ENCODE measurements at regions of chr4 and their contacts with region 1.

Region 1: DNA sequence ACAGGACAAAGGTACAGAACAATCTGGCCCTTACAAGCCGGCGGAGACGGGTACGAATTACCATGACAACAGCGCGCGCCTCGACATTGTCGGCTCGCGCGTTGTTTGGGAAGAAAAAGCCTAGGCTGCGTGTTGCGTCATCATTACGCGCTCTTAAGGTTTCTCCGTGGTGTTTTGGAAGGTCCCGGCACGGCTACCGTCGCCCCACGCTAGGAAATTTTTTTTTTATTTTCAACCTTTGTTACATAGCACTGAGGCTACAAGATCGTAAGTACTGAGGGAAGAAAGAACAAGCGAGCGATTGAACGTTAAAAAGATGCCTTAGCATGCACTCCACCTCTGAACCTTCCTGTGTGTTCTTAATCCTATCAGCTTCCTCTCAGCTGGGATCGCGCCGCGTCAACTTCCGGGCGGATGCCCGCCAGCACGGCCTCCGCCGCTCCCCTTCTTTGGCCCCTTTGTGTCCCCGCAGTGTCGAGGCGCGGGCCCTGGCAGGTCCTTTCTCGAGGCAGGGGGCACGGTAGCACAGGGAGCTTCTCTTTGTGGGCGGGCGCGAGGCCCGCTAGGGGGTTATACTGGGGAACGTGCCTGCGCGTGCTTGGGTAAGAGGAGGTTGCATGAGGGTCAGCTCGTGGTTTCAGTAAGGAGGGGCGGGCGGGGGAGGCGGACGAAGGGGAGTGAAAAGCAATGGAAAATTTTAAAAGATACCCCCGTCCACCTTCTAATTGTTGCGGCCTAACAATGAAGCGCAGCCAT is at the start of gene SMARCAD1:
- DNase-seq: peak; percentile 76 to 96 (median 87)
- ATAC-seq: peak; percentile 84
- H3K4me3 ChIP-seq: peak within 1 kb of the TSS; percentile 71 to 87
- H3K4me3 Mint-ChIP-seq: peak within 1 kb of the TSS; percentile 100
- H3K27ac ChIP-seq: peak within 1 kb of the TSS; percentile 91 to 97
- H3K27ac Mint-ChIP-seq: peak within 1 kb of the TSS; percentile 100
- H3K4me1 ChIP-seq: peaks cover 16% of the 10 kb centered on the region
- H3K4me1 Mint-ChIP-seq: peaks cover 42% of the 10 kb centered on the region
- H3K27me3 ChIP-seq: no peaks in the 10 kb centered on the region
- H3K27me3 Mint-ChIP-seq: peaks cover 5% of the 10 kb centered on the region
- CTCF ChIP-seq: no peak
- total RNA-seq, gene SMARCAD1: 9.2 to 10.0 TPM

Region 2: GRCh38 chr4:94446386-94446785 is 238.7 kb after region 1 on chr4:
- CTCF ChIA-PET with region 1: no interaction called
- POLR2A ChIA-PET with region 1: no interaction called
- intact Hi-C with region 1: loop called (anchors 1 to 5 kb)
- DNase-seq: no peak
- ATAC-seq: no peak
- H3K4me3 ChIP-seq: no peak overlapping the region
- H3K4me3 Mint-ChIP-seq: no peak overlapping the region
- H3K27ac ChIP-seq: no peak overlapping the region
- H3K27ac Mint-ChIP-seq: no peak overlapping the region
- H3K4me1 ChIP-seq: peaks cover 6% of the 10 kb centered on the region
- H3K4me1 Mint-ChIP-seq: peaks cover 5% of the 10 kb centered on the region
- H3K27me3 ChIP-seq: peaks cover 0 to 5% of the 10 kb centered on the region in 2 experiments
- H3K27me3 Mint-ChIP-seq: peaks cover 16% of the 10 kb centered on the region
- CTCF ChIP-seq: no peak

Region 3: GRCh38 chr4:94451695-94452475 is 244.2 kb after region 1 on chr4 and contains the start of gene PDLIM5:
- CTCF ChIA-PET with region 1: no interaction called
- POLR2A ChIA-PET with region 1: no interaction called
- intact Hi-C with region 1: loop called (anchors 1 to 5 kb)
- DNase-seq: peak; percentile 77 to 95 (median 88)
- ATAC-seq: peak; percentile 97
- H3K4me3 ChIP-seq: peak within 1 kb of the TSS; percentile 68 to 93
- H3K4me3 Mint-ChIP-seq: peak within 1 kb of the TSS; percentile 88
- H3K27ac ChIP-seq: peak within 1 kb of the TSS; percentile 39 to 49
- H3K27ac Mint-ChIP-seq: peak within 1 kb of the TSS; percentile 84
- H3K4me1 ChIP-seq: peaks cover 14% of the 10 kb centered on the region
- H3K4me1 Mint-ChIP-seq: peaks cover 25% of the 10 kb centered on the region
- H3K27me3 ChIP-seq: peaks cover 0 to 5% of the 10 kb centered on the region in 2 experiments
- H3K27me3 Mint-ChIP-seq: peaks cover 16% of the 10 kb centered on the region
- CTCF ChIP-seq: no peak
- total RNA-seq, gene PDLIM5: 21.6 to 22.9 TPM

Measured in CD8-positive, alpha-beta T cell (primary cell).